Caco-2 (cell line): ENCODE measurements at regions of chr7 and their contacts with region 1.

Region 1: GRCh38 chr7:23712368-23713284 is 2.6 kb downstream of the STK31 start:
- DNase-seq: peak in 1 of 2 experiments; percentile 52
- H3K4me3 ChIP-seq: no peak overlapping the region
- H3K4me3 Mint-ChIP-seq: no peak overlapping the region
- H3K27ac Mint-ChIP-seq: no peak overlapping the region
- H3K4me1 ChIP-seq: peaks cover 9% of the 10 kb centered on the region; the same call in 1 of the 2 replicates
- H3K4me1 Mint-ChIP-seq: peaks cover 14% of the 10 kb centered on the region
- H3K27me3 ChIP-seq: no peaks in the 10 kb centered on the region
- H3K27me3 Mint-ChIP-seq: no peaks in the 10 kb centered on the region
- CTCF ChIP-seq: peak; percentile 53 to 57

Region 2: GRCh38 chr7:23546897-23547572 is 165.6 kb before region 1 on chr7:
- CTCF ChIA-PET with region 1: interaction called, 17 read pairs
- POLR2A ChIA-PET with region 1: interaction called, 4 read pairs
- intact Hi-C with region 1: loop called (anchors 1 kb)
- DNase-seq: peak; percentile 86 to 87
- H3K4me3 ChIP-seq: no peak overlapping the region
- H3K4me3 Mint-ChIP-seq: no peak overlapping the region
- H3K27ac Mint-ChIP-seq: no peak overlapping the region
- H3K4me1 ChIP-seq: no peaks in the 10 kb centered on the region
- H3K4me1 Mint-ChIP-seq: peaks cover 12% of the 10 kb centered on the region
- H3K27me3 ChIP-seq: no peaks in the 10 kb centered on the region
- H3K27me3 Mint-ChIP-seq: peaks cover 2% of the 10 kb centered on the region
- CTCF ChIP-seq: peak; percentile 93 to 96

Region 3: DNA sequence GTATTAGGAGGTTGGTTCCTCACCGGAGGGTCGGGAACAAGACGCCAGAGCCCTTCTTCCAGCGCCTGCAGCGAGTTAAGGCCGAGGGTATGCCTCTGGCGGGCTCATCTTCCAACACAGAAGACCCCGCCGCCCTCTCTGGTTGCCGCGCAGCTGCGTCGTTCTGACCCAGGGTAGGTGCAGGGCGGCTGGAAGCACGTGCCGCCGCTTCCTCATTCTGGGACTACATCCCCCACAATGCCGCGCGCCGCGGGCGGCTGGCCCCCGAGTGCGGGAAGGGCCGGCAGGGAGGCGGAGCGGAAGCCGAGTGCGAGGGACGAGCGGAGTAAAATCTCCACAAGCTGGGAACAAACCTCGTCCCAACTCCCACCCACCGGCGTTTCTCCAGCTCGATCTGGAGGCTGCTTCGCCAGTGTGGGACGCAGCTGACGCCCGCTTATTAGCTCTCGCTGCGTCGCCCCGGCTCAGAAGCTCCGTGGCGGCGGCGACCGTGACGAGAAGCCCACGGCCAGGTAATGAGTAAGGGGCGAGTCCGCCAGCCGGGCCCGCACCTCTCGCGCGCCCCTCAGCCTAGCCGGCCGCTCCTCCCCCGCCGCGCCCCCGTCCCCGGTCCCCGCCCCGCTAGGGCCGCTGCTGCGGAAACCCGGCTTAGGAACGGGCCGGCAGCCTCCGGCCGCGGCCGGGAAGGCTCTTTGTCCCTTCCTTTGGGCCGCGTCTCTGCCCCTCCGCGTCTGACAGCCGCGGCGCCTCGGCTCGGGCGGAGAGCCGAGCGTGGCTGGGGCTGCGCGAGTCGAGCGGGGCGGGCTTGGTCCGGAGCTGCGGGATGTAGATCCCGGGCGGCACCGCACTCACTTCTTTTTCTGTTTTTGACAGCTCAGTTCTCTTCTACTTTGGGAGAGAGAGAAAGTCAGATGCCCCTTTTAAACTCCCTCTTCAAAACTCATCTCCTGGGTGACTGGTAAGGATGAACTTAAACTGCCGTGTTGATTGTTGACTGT is 115.2 kb before region 1 on chr7 and contains the start of gene CCDC126:
- CTCF ChIA-PET with region 1: interaction called, 4 read pairs
- POLR2A ChIA-PET with region 1: interaction called, 19 read pairs
- intact Hi-C with region 1: loop called (anchors 1 kb)
- DNase-seq: peak; percentile 95 to 97
- H3K4me3 ChIP-seq: peak within 1 kb of the TSS; percentile 63
- H3K4me3 Mint-ChIP-seq: peak within 1 kb of the TSS; percentile 94
- H3K27ac Mint-ChIP-seq: peak within 1 kb of the TSS; percentile 81
- H3K4me1 ChIP-seq: peaks cover 18% of the 10 kb centered on the region
- H3K4me1 Mint-ChIP-seq: peaks cover 22% of the 10 kb centered on the region
- H3K27me3 ChIP-seq: no peaks in the 10 kb centered on the region
- H3K27me3 Mint-ChIP-seq: peaks cover 2% of the 10 kb centered on the region
- CTCF ChIP-seq: no peak
- total RNA-seq, gene CCDC126: 10.1 and 11.3 TPM in 2 replicates

Region 4: DNA sequence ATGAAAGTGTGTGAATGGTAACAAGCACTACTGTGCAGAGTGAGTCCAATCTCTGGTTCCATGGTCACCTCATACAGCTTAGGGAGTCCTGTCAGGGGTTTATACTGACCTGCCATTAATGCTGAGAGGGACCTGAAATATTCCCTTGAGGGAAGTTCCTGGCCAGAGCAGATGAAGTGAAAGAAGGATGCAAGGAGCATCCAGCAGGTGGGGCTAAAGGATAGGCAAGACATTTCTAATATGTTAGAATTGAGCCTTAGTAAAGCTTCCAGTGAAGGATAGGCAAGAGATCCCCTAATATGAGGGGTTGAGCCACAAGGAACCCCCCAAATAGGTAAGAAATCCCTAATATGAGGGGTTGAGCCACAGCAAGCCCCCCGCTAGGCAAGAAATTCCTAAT is 58.1 kb before region 1 on chr7:
- CTCF ChIA-PET with region 1: no interaction called
- POLR2A ChIA-PET with region 1: no interaction called
- intact Hi-C with region 1: loop called (anchors 1 kb)
- DNase-seq: peak in 1 of 2 experiments; percentile 30
- H3K4me3 ChIP-seq: no peak overlapping the region
- H3K4me3 Mint-ChIP-seq: no peak overlapping the region
- H3K27ac Mint-ChIP-seq: no peak overlapping the region
- H3K4me1 ChIP-seq: no peaks in the 10 kb centered on the region; the same call in 1 of the 2 replicates
- H3K4me1 Mint-ChIP-seq: peaks cover 7% of the 10 kb centered on the region
- H3K27me3 ChIP-seq: no peaks in the 10 kb centered on the region
- H3K27me3 Mint-ChIP-seq: no peaks in the 10 kb centered on the region
- CTCF ChIP-seq: peak in 1 of 2 experiments; percentile 12

Region 5: DNA sequence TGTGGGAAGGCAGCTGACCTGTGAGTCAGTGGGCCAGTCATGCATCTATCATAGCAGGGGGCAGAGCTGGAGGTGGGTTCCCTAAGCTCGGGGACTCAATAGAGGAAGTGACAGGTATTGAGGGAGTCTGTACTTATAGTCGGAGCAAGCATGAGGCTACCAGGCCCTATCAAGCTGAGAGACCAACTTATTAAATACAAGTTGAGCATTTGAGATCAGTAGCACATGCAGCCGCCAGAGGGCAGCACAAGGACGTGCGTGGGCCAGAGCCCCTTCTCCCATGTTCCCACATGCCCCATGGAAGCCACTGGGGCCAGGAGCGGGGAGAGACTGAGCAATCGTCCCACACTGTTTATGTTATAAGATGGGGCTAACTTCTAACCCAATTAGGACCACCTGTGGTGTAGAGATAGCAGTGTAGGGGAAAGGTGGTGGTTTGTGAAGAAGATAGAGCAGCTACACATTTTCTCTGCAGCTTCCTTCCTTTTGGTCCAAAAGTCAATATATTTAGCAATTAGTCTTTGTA is 15.6 kb before region 1 on chr7:
- CTCF ChIA-PET with region 1: interaction called, 28 read pairs
- POLR2A ChIA-PET with region 1: interaction called, 4 read pairs
- intact Hi-C with region 1: loop called (anchors 1 kb)
- DNase-seq: peak; percentile 81 to 82
- H3K4me3 ChIP-seq: no peak overlapping the region
- H3K4me3 Mint-ChIP-seq: no peak overlapping the region
- H3K27ac Mint-ChIP-seq: peak overlapping the region; percentile 26
- H3K4me1 ChIP-seq: peaks cover 4% of the 10 kb centered on the region; the same call in 1 of the 2 replicates
- H3K4me1 Mint-ChIP-seq: peaks cover 8% of the 10 kb centered on the region
- H3K27me3 ChIP-seq: no peaks in the 10 kb centered on the region
- H3K27me3 Mint-ChIP-seq: no peaks in the 10 kb centered on the region
- CTCF ChIP-seq: peak; percentile 76 to 82

Region 6: GRCh38 chr7:23918856-23919255 is 206.2 kb after region 1 on chr7:
- CTCF ChIA-PET with region 1: no interaction called
- POLR2A ChIA-PET with region 1: no interaction called
- intact Hi-C with region 1: no loop called
- DNase-seq: peak in 1 of 2 experiments; percentile 47
- H3K4me3 ChIP-seq: no peak overlapping the region
- H3K4me3 Mint-ChIP-seq: no peak overlapping the region
- H3K27ac Mint-ChIP-seq: no peak overlapping the region
- H3K4me1 ChIP-seq: no peaks in the 10 kb centered on the region
- H3K4me1 Mint-ChIP-seq: no peaks in the 10 kb centered on the region
- H3K27me3 ChIP-seq: no peaks in the 10 kb centered on the region
- H3K27me3 Mint-ChIP-seq: peaks cover 11% of the 10 kb centered on the region
- CTCF ChIP-seq: no peak